Activated CD4-positive, alpha-beta T cell treated with anti-CD3 and anti-CD28 coated beads for 36 hours (primary cell): ENCODE measurements at regions of chr12 and their contacts with region 1.

Region 1: DNA sequence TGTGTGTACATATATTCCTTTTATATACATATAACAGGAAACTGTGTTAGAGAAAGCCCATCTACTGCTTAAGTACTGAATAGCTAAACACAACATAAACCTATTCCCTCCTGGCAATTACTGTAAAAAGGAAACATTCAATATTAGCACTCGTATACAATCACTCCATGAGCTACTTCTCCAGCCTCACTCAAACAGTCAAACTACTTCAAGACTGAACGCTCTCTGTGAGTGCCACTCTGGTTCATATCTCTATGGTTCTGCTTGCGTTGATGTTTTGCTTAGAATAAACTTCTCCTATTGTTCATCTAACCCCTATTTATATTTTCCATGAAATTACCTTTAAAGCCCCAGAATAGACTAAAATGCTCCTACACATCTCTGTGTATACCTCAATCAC is 243.7 kb downstream of the MED13L start:
- DNase-seq: no peak
- ATAC-seq: no peak
- H3K4me3 Mint-ChIP-seq: no peak overlapping the region
- H3K27ac Mint-ChIP-seq: no peak overlapping the region
- H3K4me1 Mint-ChIP-seq: peaks cover 11% of the 10 kb centered on the region
- H3K27me3 Mint-ChIP-seq: no peaks in the 10 kb centered on the region

Region 2: GRCh38 chr12:116048879-116049278 is 15.1 kb after region 1 on chr12:
- CTCF ChIA-PET with region 1: interaction called, 4 read pairs
- POLR2A ChIA-PET with region 1: no interaction called
- intact Hi-C with region 1: loop called in 1 of 2 experiments (anchors 2 kb)
- DNase-seq: no peak
- ATAC-seq: no peak
- H3K4me3 Mint-ChIP-seq: no peak overlapping the region
- H3K27ac Mint-ChIP-seq: no peak overlapping the region
- H3K4me1 Mint-ChIP-seq: peaks cover 50% of the 10 kb centered on the region
- H3K27me3 Mint-ChIP-seq: no peaks in the 10 kb centered on the region

Region 3: GRCh38 chr12:116199160-116199706 is 165.5 kb after region 1 on chr12:
- CTCF ChIA-PET with region 1: no interaction called
- POLR2A ChIA-PET with region 1: no interaction called
- intact Hi-C with region 1: no loop called
- DNase-seq: no peak
- ATAC-seq: no peak
- H3K4me3 Mint-ChIP-seq: no peak overlapping the region
- H3K27ac Mint-ChIP-seq: no peak overlapping the region
- H3K4me1 Mint-ChIP-seq: peaks cover 65% of the 10 kb centered on the region
- H3K27me3 Mint-ChIP-seq: no peaks in the 10 kb centered on the region

Region 4: GRCh38 chr12:116210131-116210530 is 176.4 kb after region 1 on chr12:
- CTCF ChIA-PET with region 1: no interaction called
- POLR2A ChIA-PET with region 1: no interaction called
- intact Hi-C with region 1: no loop called
- DNase-seq: no peak
- ATAC-seq: no peak
- H3K4me3 Mint-ChIP-seq: no peak overlapping the region
- H3K27ac Mint-ChIP-seq: no peak overlapping the region
- H3K4me1 Mint-ChIP-seq: peaks cover 67% of the 10 kb centered on the region
- H3K27me3 Mint-ChIP-seq: no peaks in the 10 kb centered on the region